IMR-90 (cell line): ENCODE measurements at regions of chr18 and their contacts with region 1.

Region 1: DNA sequence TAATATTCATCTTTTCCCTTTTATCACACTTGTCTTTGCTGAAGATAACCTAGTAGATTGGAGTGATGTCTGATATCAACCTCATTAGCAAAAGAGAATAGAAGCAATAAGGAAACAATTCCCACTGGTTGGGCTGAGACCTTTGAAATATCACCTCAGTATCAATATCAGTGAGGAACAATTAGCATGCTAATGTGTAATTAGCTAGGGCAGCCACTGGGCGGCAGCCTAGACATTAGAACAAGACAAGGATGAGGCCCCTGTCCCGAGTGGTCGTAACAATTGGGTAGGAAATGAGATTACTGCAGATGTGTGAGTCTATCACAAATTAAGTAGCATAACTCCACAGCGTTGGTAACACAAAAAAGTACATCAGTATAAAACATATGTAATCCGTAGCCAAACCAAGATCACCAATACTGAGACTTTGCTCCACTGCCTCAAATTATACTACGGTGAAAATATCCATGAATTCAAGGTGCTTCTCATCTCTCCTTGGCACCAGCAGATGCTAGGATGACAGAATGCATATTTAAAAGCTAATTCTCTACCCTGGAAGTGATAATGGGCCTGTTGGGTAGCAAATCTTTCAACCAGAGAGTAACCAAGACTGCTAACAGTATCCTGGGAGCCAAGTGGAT is 99.1 kb downstream of the ALPK2 start:
- DNase-seq: peak; percentile 68
- ATAC-seq: peak; percentile 82
- H3K4me3 ChIP-seq: no peak overlapping the region
- H3K27ac ChIP-seq: no peak overlapping the region
- H3K4me1 ChIP-seq: no peaks in the 10 kb centered on the region; the same call in 1 of the 2 replicates
- H3K27me3 ChIP-seq: no peaks in the 10 kb centered on the region
- CTCF ChIP-seq: peak; percentile 84
- POLR2A ChIP-seq: no peak; the same call in 1 of the 2 replicates
- RAD21 ChIP-seq: peak; percentile 90

Region 2: DNA sequence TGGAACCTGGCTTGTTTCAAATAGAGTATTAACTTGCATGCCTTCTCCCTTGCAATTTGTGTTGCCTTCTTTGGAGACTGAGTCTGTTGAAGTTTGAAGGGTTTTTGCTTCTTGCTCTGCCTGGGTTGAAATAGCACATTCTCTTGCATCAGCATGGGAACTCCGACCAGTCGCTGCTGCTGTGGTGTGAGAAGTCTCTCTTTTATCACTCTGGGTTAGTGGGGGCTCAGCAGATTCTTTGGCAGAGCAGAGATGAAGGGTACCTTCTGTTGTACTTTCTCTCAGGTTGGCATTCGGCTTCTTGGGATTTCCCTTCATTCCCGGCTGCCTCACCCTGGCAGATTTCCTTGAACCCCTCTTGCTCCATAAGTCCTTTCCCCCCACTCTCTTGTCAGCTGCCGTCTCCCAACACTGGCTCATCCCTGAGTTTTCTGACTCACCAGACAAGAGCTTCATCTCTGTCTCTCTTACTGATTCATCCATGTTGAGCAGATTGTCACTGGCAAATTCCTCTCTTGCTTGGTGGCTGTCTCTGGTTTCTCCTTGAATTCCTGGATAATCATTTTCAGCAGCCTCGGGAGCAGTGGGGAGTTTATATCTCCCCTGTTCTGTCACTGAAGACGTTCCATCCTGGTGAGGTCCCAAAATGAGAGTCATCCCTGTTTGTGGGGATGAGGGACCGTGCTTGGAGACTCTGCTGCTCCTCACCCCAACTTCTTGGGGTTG is 49.2 kb after region 1 on chr18:
- CTCF ChIA-PET with region 1: no interaction called
- POLR2A ChIA-PET with region 1: interaction called, 3 read pairs
- dilution Hi-C with region 1: no loop called
- in situ Hi-C with region 1: no loop called
- intact Hi-C with region 1: loop called (anchors 5 kb)
- DNase-seq: peak; percentile 88
- ATAC-seq: peak; percentile 28
- H3K4me3 ChIP-seq: peak overlapping the region; percentile 57
- H3K27ac ChIP-seq: peak overlapping the region; percentile 93
- H3K4me1 ChIP-seq: peaks cover 22% of the 10 kb centered on the region
- H3K27me3 ChIP-seq: no peaks in the 10 kb centered on the region
- CTCF ChIP-seq: no peak
- POLR2A ChIP-seq: peak; percentile 85
- RAD21 ChIP-seq: peak; percentile 15

Region 3: GRCh38 chr18:58671111-58671631 is 141.3 kb after region 1 on chr18 and contains the start of gene MALT1:
- CTCF ChIA-PET with region 1: no interaction called
- POLR2A ChIA-PET with region 1: interaction called, 3 read pairs
- dilution Hi-C with region 1: no loop called
- in situ Hi-C with region 1: no loop called
- intact Hi-C with region 1: loop called (anchors 2 kb)
- DNase-seq: peak; percentile 85
- ATAC-seq: peak; percentile 93
- H3K4me3 ChIP-seq: peak within 1 kb of the TSS; percentile 93
- H3K27ac ChIP-seq: peak within 1 kb of the TSS; percentile 79
- H3K4me1 ChIP-seq: peaks cover 14% of the 10 kb centered on the region
- H3K27me3 ChIP-seq: no peaks in the 10 kb centered on the region
- CTCF ChIP-seq: no peak
- POLR2A ChIP-seq: peak; percentile 89
- RAD21 ChIP-seq: no peak
- total RNA-seq, gene MALT1: 25.3 and 25.8 TPM in 2 replicates

Region 4: DNA sequence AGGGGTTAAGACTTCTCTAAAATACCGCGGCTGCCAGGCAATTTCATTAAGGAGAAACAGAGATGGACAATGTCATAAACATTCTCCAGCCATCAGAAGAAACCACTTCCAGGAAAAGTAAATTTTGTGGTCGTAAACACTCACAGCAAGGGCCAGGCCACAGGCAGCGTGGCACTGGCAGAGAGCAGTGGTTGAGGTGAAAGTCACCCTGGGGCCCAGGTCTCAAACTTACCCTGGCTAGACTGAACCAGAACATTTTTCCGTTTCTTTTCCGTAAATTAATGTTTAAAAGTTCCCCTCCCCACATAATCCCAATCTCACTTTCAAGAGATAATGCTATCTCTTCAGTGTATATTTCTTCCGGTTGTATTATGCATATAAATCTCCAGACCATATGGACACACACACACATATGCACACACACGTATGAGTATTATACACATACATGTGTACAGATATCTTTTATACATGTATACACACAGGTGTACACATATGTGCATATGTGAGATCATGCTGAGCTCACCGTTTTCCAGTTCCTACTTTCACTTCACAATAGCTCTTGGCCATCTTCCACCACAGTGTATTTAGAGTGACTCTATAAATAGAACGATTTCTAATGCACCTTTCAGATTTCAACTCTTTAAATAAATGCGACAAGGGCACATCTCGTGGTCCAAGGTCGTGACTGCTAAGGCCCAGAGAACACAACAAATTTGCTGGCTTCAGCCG is 231.6 kb after region 1 on chr18:
- CTCF ChIA-PET with region 1: interaction called, 32 read pairs
- POLR2A ChIA-PET with region 1: no interaction called
- dilution Hi-C with region 1: no loop called
- in situ Hi-C with region 1: loop called (anchors 5 kb)
- intact Hi-C with region 1: loop called (anchors 1 kb)
- DNase-seq: peak; percentile 40
- ATAC-seq: no peak
- H3K4me3 ChIP-seq: no peak overlapping the region
- H3K27ac ChIP-seq: no peak overlapping the region
- H3K4me1 ChIP-seq: no peaks in the 10 kb centered on the region
- H3K27me3 ChIP-seq: peaks cover 14% of the 10 kb centered on the region
- CTCF ChIP-seq: no peak
- POLR2A ChIP-seq: no peak
- RAD21 ChIP-seq: no peak

Region 5: GRCh38 chr18:59070181-59070912 is 540.5 kb after region 1 on chr18:
- CTCF ChIA-PET with region 1: no interaction called
- POLR2A ChIA-PET with region 1: no interaction called
- dilution Hi-C with region 1: no loop called
- in situ Hi-C with region 1: loop called (anchors 10 kb)
- intact Hi-C with region 1: loop called (anchors 10 kb)
- DNase-seq: peak; percentile 69
- ATAC-seq: peak; percentile 96
- H3K4me3 ChIP-seq: no peak overlapping the region
- H3K27ac ChIP-seq: no peak overlapping the region
- H3K4me1 ChIP-seq: no peaks in the 10 kb centered on the region
- H3K27me3 ChIP-seq: peaks cover 6% of the 10 kb centered on the region
- CTCF ChIP-seq: peak; percentile 87
- POLR2A ChIP-seq: no peak
- RAD21 ChIP-seq: peak; percentile 89